CD4-positive, alpha-beta T cell (primary cell): ENCODE measurements at regions of chr1 and their contacts with region 1.

Region 1: DNA sequence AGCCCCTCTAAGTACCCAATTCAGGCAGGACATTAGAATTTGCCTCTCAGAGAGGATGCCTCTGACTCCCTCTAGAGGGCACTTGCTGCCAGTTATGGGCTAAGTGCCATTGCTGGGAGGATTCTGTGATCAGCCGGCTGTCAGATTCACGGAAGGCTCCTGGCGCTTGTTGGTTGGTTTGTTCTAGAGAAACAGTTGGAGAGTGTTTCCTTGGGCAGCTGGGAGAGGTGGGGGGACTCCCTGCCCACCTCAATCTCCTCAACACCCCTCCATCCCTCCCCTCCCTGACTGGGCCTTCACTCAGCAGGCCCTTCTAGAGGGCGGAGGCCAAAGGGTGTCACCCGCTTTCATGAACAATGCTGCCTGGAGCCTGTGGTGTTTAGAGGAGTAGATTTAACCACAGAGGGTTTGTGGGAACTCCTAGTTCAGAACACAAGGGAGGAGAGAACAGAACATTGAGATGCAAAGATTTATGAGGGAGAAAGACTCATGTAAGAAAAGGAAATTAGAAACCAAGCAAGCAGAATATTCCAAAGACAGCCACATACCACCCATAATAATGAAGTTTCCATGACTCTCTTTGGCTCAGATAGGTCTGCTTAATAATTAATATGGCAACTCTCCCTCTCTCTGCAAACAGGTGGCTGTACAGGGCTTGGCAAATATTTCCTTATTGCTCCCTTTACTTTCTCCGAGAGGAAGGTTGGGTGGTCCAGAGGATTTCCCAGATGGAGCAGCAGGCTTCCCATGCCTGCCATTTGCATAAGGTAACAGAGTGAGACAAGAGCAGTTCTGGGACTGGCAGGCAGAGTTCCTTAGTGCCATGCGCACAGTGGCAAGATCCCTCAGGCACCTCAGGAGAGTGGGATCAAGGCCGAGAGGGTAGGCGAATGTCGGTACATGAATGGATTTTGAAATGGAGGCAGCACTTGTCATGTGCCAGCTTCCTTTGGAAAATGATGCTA is 30.0 kb upstream of the ACP6 start:
- DNase-seq: peak; percentile 36 to 79 (median 50)
- ATAC-seq: peak; percentile 92
- H3K4me3 ChIP-seq: peak overlapping the region; percentile 27
- H3K4me3 Mint-ChIP-seq: peak overlapping the region; percentile 46
- H3K27ac ChIP-seq: peak overlapping the region in 1 of 2 donors; percentile 35
- H3K27ac Mint-ChIP-seq: peak overlapping the region; percentile 62
- H3K4me1 ChIP-seq: peaks cover 14% of the 10 kb centered on the region
- H3K4me1 Mint-ChIP-seq: peaks cover 15% of the 10 kb centered on the region
- H3K27me3 ChIP-seq: peaks cover 0 to 6% of the 10 kb centered on the region in 2 experiments
- H3K27me3 Mint-ChIP-seq: peaks cover 19% of the 10 kb centered on the region
- CTCF ChIP-seq: peak; percentile 92

Region 2: DNA sequence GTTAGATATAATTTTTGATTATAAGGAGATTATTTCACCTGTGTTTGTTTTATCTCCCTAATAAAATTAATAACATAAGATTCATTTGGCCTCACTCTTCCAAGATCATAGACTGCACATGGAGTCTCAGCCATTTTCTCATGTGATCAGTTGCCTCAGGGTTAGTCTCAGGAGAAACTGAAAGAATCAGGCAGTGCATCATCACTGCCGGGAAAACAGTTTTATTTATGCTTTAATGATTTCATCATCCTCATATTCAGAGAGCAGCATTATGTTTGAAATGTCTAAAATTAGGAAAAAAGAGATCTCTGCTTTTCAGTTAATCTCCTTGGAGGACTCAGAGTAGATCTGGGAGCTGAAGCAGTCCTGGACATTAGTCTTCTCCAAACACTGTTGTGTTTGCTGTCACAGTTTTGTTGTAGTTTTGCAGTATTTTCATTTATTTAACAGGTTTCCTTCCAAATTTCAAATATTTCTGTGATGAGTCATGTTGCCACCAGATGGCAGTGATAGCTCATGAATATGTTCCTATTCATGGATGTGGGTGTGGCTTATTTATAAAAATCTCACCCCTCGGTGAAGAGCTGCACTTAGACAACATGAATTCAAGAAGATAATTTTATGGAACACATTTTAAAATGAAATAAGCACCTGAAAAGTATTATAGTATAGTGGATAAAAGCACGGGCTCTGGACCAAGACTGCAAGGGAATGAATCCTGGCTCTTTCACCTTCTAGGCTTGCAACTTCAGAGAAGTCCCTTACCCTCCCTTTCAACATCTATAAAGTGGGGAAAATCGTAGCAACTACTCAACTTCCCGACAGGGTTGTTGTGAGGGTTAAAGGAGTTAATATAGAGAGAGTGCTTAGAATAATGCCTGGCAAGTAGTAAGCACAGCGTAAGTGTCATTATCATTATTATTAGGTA is 426.7 kb before region 1 on chr1:
- CTCF ChIA-PET with region 1: no interaction called
- POLR2A ChIA-PET with region 1: no interaction called
- intact Hi-C with region 1: loop called in 1 of 2 experiments (anchors 1 kb)
- DNase-seq: peak in 6 of 14 experiments; percentile 0 to 71 (median 46)
- ATAC-seq: peak; percentile 68
- H3K4me3 ChIP-seq: no peak overlapping the region
- H3K4me3 Mint-ChIP-seq: no peak overlapping the region
- H3K27ac ChIP-seq: no peak overlapping the region
- H3K27ac Mint-ChIP-seq: no peak overlapping the region
- H3K4me1 ChIP-seq: no peaks in the 10 kb centered on the region
- H3K4me1 Mint-ChIP-seq: no peaks in the 10 kb centered on the region
- H3K27me3 ChIP-seq: no peaks in the 10 kb centered on the region
- H3K27me3 Mint-ChIP-seq: no peaks in the 10 kb centered on the region
- CTCF ChIP-seq: peak; percentile 76

Region 3: GRCh38 chr1:147494998-147495580 is 205.2 kb before region 1 on chr1:
- CTCF ChIA-PET with region 1: no interaction called
- POLR2A ChIA-PET with region 1: no interaction called
- intact Hi-C with region 1: loop called (anchors 2 to 5 kb)
- DNase-seq: peak; percentile 50 to 85 (median 64)
- ATAC-seq: peak; percentile 96
- H3K4me3 ChIP-seq: no peak overlapping the region
- H3K4me3 Mint-ChIP-seq: no peak overlapping the region
- H3K27ac ChIP-seq: no peak overlapping the region
- H3K27ac Mint-ChIP-seq: no peak overlapping the region
- H3K4me1 ChIP-seq: peaks cover 6% of the 10 kb centered on the region
- H3K4me1 Mint-ChIP-seq: no peaks in the 10 kb centered on the region
- H3K27me3 ChIP-seq: no peaks in the 10 kb centered on the region
- H3K27me3 Mint-ChIP-seq: peaks cover 12% of the 10 kb centered on the region
- CTCF ChIP-seq: peak; percentile 96

Region 4: DNA sequence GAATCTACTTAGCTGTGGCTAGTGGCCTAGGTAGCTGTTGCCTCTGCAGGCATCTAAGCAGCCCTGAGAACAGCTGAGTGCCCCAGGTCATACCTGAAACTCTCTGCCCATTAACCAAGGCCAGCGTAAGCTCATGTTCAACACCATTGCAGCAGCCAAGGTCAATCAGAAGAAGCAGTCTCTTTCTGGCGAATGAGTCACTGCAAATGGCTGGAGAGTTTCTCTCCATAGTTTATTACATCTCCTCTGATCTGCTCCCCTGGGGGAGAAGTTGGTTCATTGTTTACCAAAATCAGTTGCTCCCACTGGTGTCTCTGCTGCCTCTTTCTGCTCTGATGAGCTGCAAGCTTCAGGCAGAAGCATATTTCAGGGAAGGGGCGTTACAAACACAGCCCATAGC is 165.9 kb before region 1 on chr1:
- CTCF ChIA-PET with region 1: no interaction called
- POLR2A ChIA-PET with region 1: no interaction called
- intact Hi-C with region 1: no loop called
- DNase-seq: no peak
- ATAC-seq: no peak
- H3K4me3 ChIP-seq: no peak overlapping the region
- H3K4me3 Mint-ChIP-seq: no peak overlapping the region
- H3K27ac ChIP-seq: no peak overlapping the region
- H3K27ac Mint-ChIP-seq: no peak overlapping the region
- H3K4me1 ChIP-seq: peaks cover 3% of the 10 kb centered on the region
- H3K4me1 Mint-ChIP-seq: peaks cover 5% of the 10 kb centered on the region
- H3K27me3 ChIP-seq: no peaks in the 10 kb centered on the region
- H3K27me3 Mint-ChIP-seq: no peaks in the 10 kb centered on the region
- CTCF ChIP-seq: no peak